Activated B cell treated with CpG ODN at 0.5 μM for 24 hours (primary cell): ENCODE measurements at regions of chr12 and their contacts with region 1.

Region 1: GRCh38 chr12:98424726-98425401 is 90.5 kb upstream of the TMPO start:
- DNase-seq: no peak
- ATAC-seq: peak; percentile 37
- H3K4me3 Mint-ChIP-seq: no peak overlapping the region
- H3K27ac Mint-ChIP-seq: no peak overlapping the region
- H3K4me1 Mint-ChIP-seq: peaks cover 2% of the 10 kb centered on the region
- H3K27me3 Mint-ChIP-seq: peaks cover 2% of the 10 kb centered on the region
- CTCF ChIP-seq: no peak

Region 2: GRCh38 chr12:98388126-98388525 is 36.7 kb before region 1 on chr12:
- CTCF ChIA-PET with region 1: no interaction called
- POLR2A ChIA-PET with region 1: no interaction called
- intact Hi-C with region 1: no loop called
- DNase-seq: no peak
- ATAC-seq: no peak
- H3K4me3 Mint-ChIP-seq: no peak overlapping the region
- H3K27ac Mint-ChIP-seq: no peak overlapping the region
- H3K4me1 Mint-ChIP-seq: no peaks in the 10 kb centered on the region
- H3K27me3 Mint-ChIP-seq: peaks cover 13% of the 10 kb centered on the region
- CTCF ChIP-seq: no peak

Region 3: GRCh38 chr12:98490501-98491453 is 65.9 kb after region 1 on chr12:
- CTCF ChIA-PET with region 1: interaction called, 4 read pairs
- POLR2A ChIA-PET with region 1: no interaction called
- intact Hi-C with region 1: loop called (anchors 2 kb)
- DNase-seq: peak; percentile 72
- ATAC-seq: peak; percentile 98
- H3K4me3 Mint-ChIP-seq: peak overlapping the region; percentile 12
- H3K27ac Mint-ChIP-seq: peak overlapping the region; percentile 82
- H3K4me1 Mint-ChIP-seq: peaks cover 4% of the 10 kb centered on the region
- H3K27me3 Mint-ChIP-seq: peaks cover under 1% of the 10 kb centered on the region
- CTCF ChIP-seq: no peak

Region 4: DNA sequence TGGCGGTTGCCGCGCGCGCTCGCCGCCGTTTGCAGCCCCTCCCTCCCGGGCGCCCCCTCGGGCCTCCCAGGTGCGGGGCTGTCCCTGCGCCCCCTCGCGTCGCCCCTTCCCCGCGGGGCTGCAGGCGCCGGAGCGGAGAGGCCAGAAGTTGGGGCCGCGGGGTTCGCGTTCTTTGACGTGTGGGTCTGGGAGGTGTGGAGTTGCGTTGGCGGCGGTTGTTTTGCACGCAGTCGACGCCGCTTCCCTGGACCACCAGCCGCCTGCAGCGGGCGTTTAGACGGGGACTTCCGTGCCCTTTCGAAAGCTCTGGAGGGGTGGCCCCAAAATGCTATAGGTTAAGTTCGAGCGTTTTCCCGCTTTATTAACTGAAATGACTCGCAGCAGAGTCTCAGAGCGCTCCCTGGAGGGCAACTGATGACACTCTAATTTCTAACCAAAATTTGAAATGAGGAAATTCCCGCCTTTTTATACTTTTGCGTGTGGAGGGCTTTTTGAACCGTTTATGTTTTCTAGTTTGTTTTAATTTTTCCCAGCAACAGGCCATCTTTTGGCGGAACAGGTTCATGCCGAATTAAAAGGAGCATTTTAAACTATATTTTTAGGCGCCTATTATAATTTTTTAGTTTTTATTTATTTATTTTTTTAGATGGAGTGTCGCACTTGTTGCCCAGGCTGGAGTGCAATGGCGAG is 91.5 kb after region 1 on chr12:
- CTCF ChIA-PET with region 1: interaction called, 9 read pairs
- POLR2A ChIA-PET with region 1: no interaction called
- intact Hi-C with region 1: loop called (anchors 1 kb)
- DNase-seq: peak; percentile 71
- ATAC-seq: peak; percentile 63
- H3K4me3 Mint-ChIP-seq: peak overlapping the region; percentile 98
- H3K27ac Mint-ChIP-seq: peak overlapping the region; percentile 97
- H3K4me1 Mint-ChIP-seq: peaks cover 61% of the 10 kb centered on the region
- H3K27me3 Mint-ChIP-seq: no peaks in the 10 kb centered on the region
- CTCF ChIP-seq: no peak

Region 5: GRCh38 chr12:98532681-98533304 is 107.9 kb after region 1 on chr12:
- CTCF ChIA-PET with region 1: interaction called, 5 read pairs
- POLR2A ChIA-PET with region 1: no interaction called
- intact Hi-C with region 1: loop called (anchors 1 kb)
- DNase-seq: no peak
- ATAC-seq: peak; percentile 37
- H3K4me3 Mint-ChIP-seq: no peak overlapping the region
- H3K27ac Mint-ChIP-seq: no peak overlapping the region
- H3K4me1 Mint-ChIP-seq: peaks cover under 1% of the 10 kb centered on the region
- H3K27me3 Mint-ChIP-seq: no peaks in the 10 kb centered on the region
- CTCF ChIP-seq: no peak

Region 6: DNA sequence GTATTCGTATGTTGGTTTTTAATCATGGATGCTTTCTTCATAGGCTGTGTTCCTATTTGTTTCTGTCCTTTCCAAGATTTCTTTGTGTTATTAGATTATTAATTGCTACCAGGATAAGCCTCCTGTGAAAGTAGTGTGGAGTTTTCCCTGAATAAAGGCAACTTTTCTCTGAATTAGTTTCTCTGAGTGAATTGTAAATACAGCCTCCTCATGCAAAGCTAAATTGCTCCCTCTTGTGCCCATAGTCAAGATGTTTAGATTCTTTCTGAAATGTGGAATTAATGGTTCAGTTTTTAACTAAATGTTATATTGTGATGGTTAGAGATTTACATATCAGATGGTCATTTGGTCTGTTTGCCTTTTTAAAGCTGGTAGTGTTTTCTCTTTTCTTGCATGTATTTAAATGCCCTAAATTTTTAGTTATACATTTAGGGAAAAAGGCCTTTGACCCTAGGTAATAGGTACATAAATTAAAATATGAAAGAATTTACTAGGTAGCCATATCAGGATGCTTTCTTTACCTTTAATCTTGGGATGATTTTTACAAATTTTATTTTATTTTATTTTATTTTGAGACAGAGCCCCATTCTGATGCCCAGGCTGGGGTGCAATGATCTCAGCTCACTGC is 229.1 kb after region 1 on chr12:
- CTCF ChIA-PET with region 1: no interaction called
- POLR2A ChIA-PET with region 1: no interaction called
- intact Hi-C with region 1: loop called (anchors 1 kb)
- DNase-seq: no peak
- ATAC-seq: peak; percentile 56
- H3K4me3 Mint-ChIP-seq: no peak overlapping the region
- H3K27ac Mint-ChIP-seq: no peak overlapping the region
- H3K4me1 Mint-ChIP-seq: no peaks in the 10 kb centered on the region
- H3K27me3 Mint-ChIP-seq: no peaks in the 10 kb centered on the region
- CTCF ChIP-seq: peak; percentile 21

Region 7: DNA sequence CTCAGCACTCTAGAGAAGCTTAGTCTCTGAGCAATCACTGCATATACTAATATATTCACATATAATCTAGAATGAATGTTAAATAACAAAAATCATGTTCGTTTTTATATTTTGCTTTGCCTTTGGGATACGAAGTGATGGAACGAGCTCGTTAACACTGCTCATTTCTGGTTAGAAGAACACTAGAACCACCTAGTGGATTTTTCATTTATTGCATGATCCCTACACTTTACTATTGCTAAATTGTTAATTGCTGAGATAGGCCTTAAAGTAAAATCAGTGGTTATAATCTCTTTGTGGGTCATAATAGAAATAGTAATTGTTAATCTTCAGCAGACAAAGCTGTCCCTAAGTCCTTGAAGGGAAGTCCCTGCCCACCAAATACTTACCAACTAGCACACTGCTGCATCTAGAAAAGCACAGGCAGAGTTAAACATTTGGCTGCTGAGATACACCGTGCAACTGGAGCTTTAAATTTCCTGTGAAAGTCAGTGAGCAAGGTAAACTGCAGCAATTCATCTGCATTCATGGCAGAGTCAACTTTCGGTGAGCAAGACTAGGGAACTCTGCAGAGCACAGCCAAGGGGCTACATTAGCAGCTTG is 573.9 kb after region 1 on chr12:
- CTCF ChIA-PET with region 1: no interaction called
- POLR2A ChIA-PET with region 1: no interaction called
- intact Hi-C with region 1: loop called (anchors 10 kb)
- DNase-seq: no peak
- ATAC-seq: no peak
- H3K4me3 Mint-ChIP-seq: no peak overlapping the region
- H3K27ac Mint-ChIP-seq: no peak overlapping the region
- H3K4me1 Mint-ChIP-seq: no peaks in the 10 kb centered on the region
- H3K27me3 Mint-ChIP-seq: no peaks in the 10 kb centered on the region
- CTCF ChIP-seq: no peak